ENCODE measurements at regions of chr2 and their contacts with region 1.

Region 1: GRCh38 chr2:26314243-26314642 is 31.7 kb upstream of the SELENOI start:
- DNase-seq: no peak
- ATAC-seq: no peak
- H3K4me3 ChIP-seq: no peak overlapping the region
- H3K27ac ChIP-seq: no peak overlapping the region
- H3K4me1 ChIP-seq: no peaks in the 10 kb centered on the region
- H3K27me3 ChIP-seq: peaks cover 35% of the 10 kb centered on the region
- CTCF ChIP-seq: no peak
- POLR2A ChIP-seq: no peak
- RAD21 ChIP-seq: no peak

Region 2: DNA sequence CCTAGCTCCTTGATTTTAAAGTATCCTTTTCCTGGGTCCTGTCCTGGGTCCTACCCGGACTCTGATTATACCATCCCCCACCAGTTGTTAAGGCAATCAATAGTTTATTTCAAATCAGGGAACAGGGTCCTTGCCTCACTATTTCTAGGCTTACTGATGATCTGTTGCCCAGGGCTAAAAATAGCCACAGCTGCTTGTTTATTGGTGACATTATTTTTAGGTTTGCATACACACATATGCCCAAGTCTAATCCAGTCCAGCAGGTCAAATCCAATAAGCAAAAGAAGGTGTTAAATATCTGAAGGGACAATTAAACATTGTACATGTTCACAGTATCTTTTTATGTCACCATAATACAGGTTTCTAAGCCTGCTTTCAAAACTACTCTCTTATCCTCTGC is 214.3 kb before region 1 on chr2:
- CTCF ChIA-PET with region 1: no interaction called
- POLR2A ChIA-PET with region 1: interaction called, 13 read pairs
- dilution Hi-C with region 1: no loop called
- in situ Hi-C with region 1: no loop called
- intact Hi-C with region 1: no loop called
- DNase-seq: no peak
- ATAC-seq: no peak
- H3K4me3 ChIP-seq: no peak overlapping the region
- H3K27ac ChIP-seq: no peak overlapping the region
- H3K4me1 ChIP-seq: peaks cover 3% of the 10 kb centered on the region
- H3K27me3 ChIP-seq: no peaks in the 10 kb centered on the region
- CTCF ChIP-seq: no peak
- POLR2A ChIP-seq: no peak
- RAD21 ChIP-seq: no peak

Measured in IMR-90 (cell line).